Sigmoid colon (tissue), 7 donors: ENCODE measurements at regions of chr1 and their contacts with region 1.

Region 1: DNA sequence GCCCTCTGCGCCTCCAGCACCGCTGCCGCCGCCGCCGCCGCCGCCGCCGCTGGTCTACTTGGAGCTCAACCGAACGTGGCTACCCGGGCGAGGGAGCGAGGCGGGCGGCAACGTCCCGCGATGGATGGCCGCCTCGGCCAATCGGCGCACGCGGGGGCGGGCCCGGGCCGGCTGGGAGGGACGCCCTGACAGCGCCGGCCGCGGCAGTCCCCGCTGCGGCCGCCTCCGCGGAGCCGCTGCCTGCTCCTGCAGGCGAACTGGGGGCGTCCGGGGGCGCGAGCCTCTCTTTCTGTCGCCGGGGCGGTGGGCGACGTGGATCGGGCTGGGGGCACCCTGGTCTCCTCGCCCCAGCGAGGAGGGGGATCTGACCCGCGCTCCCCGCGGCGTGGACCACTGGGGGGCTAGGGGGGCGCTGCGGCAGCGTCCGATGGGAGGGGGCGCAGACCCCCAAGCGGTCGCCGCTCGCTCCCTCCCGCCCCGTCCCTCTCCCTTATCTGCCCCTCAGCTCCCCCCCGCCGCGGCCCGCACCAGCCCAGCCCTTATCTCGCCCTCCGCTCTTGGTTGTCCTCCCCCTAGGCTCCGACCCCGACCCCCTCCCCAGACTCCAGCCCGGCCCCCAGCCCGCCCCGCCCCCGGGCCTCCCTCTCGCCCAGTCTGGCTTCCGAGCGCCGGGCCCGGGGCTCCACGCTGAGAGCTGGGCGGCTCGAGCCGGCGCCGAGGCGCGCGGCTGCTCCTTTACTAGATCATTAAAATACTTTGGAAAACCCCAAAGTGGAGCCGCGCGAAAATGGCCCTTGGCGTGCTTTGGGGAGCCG is at the start of gene SSBP3:
- DNase-seq: peak; percentile 95
- H3K4me3 ChIP-seq: peak within 1 kb of the TSS; percentile 75 to 99 (median 94)
- H3K27ac ChIP-seq: peak within 1 kb of the TSS; percentile 96 to 100 (median 98)
- H3K4me1 ChIP-seq: peaks cover 0 to 60% (median 47%) of the 10 kb centered on the region in 4 donors
- H3K27me3 ChIP-seq: no peaks in the 10 kb centered on the region
- CTCF ChIP-seq: no peak
- EP300 ChIP-seq: no peak
- POLR2A ChIP-seq: peak; percentile 62 to 70
- total RNA-seq, gene SSBP3: 27.4 to 38.5 (median 34.8) TPM

Region 2: DNA sequence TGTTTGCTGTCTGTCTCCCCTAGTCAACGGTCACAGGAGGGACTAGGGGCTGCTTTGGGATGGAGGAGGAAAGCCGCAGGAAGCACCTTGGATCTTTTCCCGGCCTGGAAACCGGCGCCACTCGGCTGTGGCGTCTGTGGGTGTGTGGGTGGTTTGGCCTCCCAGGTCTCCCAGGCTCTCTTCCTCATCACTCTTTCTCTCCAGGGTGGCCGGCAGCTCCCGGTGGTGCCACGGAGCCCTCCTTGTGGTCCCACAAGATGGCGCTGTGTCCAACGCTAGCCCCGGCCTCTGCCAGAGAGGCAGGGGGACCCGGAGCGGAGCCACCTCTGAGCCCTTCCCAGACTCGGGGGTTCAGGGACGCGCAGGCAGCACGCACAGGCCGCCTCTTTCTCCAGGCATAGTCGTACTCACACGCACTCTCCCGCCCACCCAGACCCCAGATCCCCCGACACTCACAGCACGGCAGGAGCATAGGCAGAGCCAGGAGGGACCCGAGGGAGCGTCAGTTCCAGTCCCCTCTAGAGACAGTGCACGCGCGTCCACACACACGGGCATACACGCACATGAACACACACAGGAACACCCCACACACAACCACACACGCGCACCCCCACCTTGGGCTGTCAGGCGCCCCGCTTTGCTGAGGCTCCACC is 284.9 kb before region 1 on chr1:
- intact Hi-C with region 1: loop called (anchors 5 kb)
- DNase-seq: peak; percentile 90
- H3K4me3 ChIP-seq: peak overlapping the region in 3 of 4 donors; percentile 13 to 34 (median 32)
- H3K27ac ChIP-seq: no peak overlapping the region
- H3K4me1 ChIP-seq: peaks cover 0 to 13% (median 12%) of the 10 kb centered on the region in 4 donors
- H3K27me3 ChIP-seq: no peaks in the 10 kb centered on the region
- CTCF ChIP-seq: peak; percentile 63 to 84 (median 75)
- EP300 ChIP-seq: no peak
- POLR2A ChIP-seq: no peak

Region 3: GRCh38 chr1:54324251-54325140 is 82.0 kb before region 1 on chr1:
- intact Hi-C with region 1: loop called (anchors 5 kb)
- DNase-seq: peak; percentile 87
- H3K4me3 ChIP-seq: no peak overlapping the region
- H3K27ac ChIP-seq: peak overlapping the region; percentile 74 to 83 (median 80)
- H3K4me1 ChIP-seq: peaks cover 0 to 76% (median 71%) of the 10 kb centered on the region in 4 donors
- H3K27me3 ChIP-seq: no peaks in the 10 kb centered on the region
- CTCF ChIP-seq: no peak
- EP300 ChIP-seq: no peak
- POLR2A ChIP-seq: no peak

Region 4: GRCh38 chr1:54464482-54465146 is 58.1 kb after region 1 on chr1:
- intact Hi-C with region 1: loop called (anchors 2 kb)
- DNase-seq: peak; percentile 53
- H3K4me3 ChIP-seq: no peak overlapping the region
- H3K27ac ChIP-seq: peak overlapping the region in 3 of 4 donors; percentile 34 to 51 (median 42)
- H3K4me1 ChIP-seq: peaks cover 0 to 29% (median 21%) of the 10 kb centered on the region in 4 donors
- H3K27me3 ChIP-seq: no peaks in the 10 kb centered on the region
- CTCF ChIP-seq: no peak
- EP300 ChIP-seq: no peak
- POLR2A ChIP-seq: no peak

Region 5: GRCh38 chr1:54547601-54548388 is 141.2 kb after region 1 on chr1 and contains the start of gene ACOT11:
- intact Hi-C with region 1: loop called (anchors 2 kb)
- DNase-seq: peak; percentile 98
- H3K4me3 ChIP-seq: peak within 1 kb of the TSS; percentile 17 to 51 (median 46)
- H3K27ac ChIP-seq: peak within 1 kb of the TSS; percentile 83 to 90 (median 88)
- H3K4me1 ChIP-seq: peaks cover 0 to 53% (median 51%) of the 10 kb centered on the region in 4 donors
- H3K27me3 ChIP-seq: no peaks in the 10 kb centered on the region
- CTCF ChIP-seq: peak; percentile 66 to 93 (median 78)
- EP300 ChIP-seq: peak; percentile 30 to 83 (median 60)
- POLR2A ChIP-seq: peak in 1 of 2 donors; percentile 50
- total RNA-seq, gene ACOT11: 8.9 to 30.5 (median 19.8) TPM